Breast epithelium (tissue), 4 donors: ENCODE measurements at regions of chr2 and their contacts with region 1.

Region 1: DNA sequence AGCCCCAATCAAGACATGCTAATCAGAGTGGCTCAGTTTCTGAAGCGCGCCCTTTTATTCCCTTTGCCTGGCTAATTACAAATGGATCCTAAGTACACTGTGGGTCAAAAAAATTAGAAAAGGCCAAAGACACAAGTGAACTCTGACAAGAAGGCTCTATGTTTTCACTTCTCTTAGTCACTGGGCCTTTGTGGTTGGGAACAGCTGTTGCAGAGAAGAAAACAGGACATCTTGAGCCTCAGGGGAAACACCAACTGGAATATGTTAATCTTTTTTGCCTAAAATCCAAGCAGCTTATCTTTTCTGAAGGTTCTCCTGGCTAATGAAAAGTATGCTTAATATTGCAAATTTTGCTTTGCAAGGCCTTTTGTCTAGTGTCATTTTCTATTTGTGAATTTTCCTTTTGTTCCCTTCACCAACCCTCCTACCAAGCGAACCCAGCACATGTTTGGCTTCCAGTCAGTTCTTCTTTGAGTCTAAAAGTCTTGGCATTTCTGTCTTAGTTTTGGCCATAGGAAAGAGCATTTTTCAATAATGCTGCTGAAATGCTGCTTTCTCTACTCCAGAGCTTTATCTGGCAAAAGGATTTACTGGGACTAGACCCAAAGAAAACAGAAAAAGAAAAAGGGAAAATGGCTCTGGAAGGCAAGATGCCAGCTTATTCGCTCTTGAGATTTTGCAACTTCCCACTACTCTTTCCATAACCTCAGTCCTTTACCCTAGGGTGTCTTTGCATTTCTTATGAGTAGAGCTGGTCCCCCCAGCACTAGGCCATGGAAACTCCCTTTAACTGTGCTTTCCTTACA is 440.2 kb upstream of the ST6GAL2 start:
- DNase-seq: peak in 1 of 2 donors; percentile 20
- H3K4me3 ChIP-seq: no peak overlapping the region
- H3K27ac ChIP-seq: peak overlapping the region; percentile 77 to 89
- H3K4me1 ChIP-seq: peaks cover 0 to 8% of the 10 kb centered on the region in 2 donors
- H3K27me3 ChIP-seq: no peaks in the 10 kb centered on the region
- CTCF ChIP-seq: no peak
- POLR2A ChIP-seq: no peak

Region 2: GRCh38 chr2:106965611-106966010 is 360.6 kb before region 1 on chr2:
- intact Hi-C with region 1: loop called (anchors 5 kb)
- DNase-seq: no peak
- H3K4me3 ChIP-seq: no peak overlapping the region
- H3K27ac ChIP-seq: no peak overlapping the region
- H3K4me1 ChIP-seq: no peaks in the 10 kb centered on the region
- H3K27me3 ChIP-seq: no peaks in the 10 kb centered on the region
- CTCF ChIP-seq: no peak
- POLR2A ChIP-seq: no peak

Region 3: GRCh38 chr2:107607054-107607453 is 280.9 kb after region 1 on chr2:
- intact Hi-C with region 1: no loop called
- DNase-seq: no peak
- H3K4me3 ChIP-seq: no peak overlapping the region
- H3K27ac ChIP-seq: no peak overlapping the region
- H3K4me1 ChIP-seq: no peaks in the 10 kb centered on the region
- H3K27me3 ChIP-seq: no peaks in the 10 kb centered on the region
- CTCF ChIP-seq: no peak
- POLR2A ChIP-seq: no peak

Region 4: GRCh38 chr2:108029496-108029895 is 703.3 kb after region 1 on chr2:
- intact Hi-C with region 1: no loop called
- DNase-seq: no peak
- H3K4me3 ChIP-seq: no peak overlapping the region
- H3K27ac ChIP-seq: no peak overlapping the region
- H3K4me1 ChIP-seq: no peaks in the 10 kb centered on the region
- H3K27me3 ChIP-seq: no peaks in the 10 kb centered on the region
- CTCF ChIP-seq: no peak
- POLR2A ChIP-seq: no peak